Activated naive CD4-positive, alpha-beta T cell treated with anti-CD3 and anti-CD28 coated beads for 36 hours (primary cell): ENCODE measurements at regions of chr9 and their contacts with region 1.

Region 1: DNA sequence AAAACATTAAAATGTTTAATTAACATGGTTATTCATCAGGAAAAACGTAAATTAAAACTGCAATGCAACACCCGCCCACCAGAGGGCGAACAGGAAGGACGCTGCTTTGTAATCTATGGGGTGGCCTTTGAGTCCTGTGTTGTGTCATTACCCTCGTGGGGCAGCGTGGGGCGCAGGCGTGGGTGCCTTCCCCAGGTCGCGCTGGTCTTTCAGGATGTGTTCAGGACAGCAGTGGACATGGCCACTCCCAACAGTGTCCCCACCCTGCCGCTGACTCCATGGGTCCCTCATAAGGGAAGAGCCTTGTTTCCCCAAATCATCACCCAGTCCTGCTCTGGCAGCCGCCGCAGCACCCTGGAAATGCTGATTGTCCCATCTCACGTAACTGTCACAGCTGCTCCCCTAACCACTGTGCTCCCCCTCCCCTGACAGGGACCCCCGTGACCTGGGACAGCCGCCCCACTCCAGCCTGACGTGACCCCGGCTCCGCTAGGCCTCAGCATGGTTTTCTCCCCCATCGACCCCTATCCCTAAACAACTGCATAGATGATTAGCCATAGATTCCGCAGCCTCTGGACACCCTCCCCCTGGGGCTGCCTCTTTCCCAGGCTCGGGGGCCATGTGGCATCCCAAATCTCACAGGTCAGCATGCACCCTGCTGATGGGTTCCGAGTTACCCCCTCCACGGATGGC is 36.4 kb downstream of the GLT6D1 start:
- DNase-seq: peak; percentile 70
- H3K4me3 Mint-ChIP-seq: no peak overlapping the region
- H3K27ac Mint-ChIP-seq: no peak overlapping the region
- H3K4me1 Mint-ChIP-seq: no peaks in the 10 kb centered on the region
- H3K27me3 Mint-ChIP-seq: peaks cover 4% of the 10 kb centered on the region

Region 2: GRCh38 chr9:135500525-135501358 is 102.2 kb before region 1 on chr9 and contains the start of gene MRPS2:
- CTCF ChIA-PET with region 1: no interaction called
- intact Hi-C with region 1: loop called (anchors 5 kb)
- DNase-seq: peak; percentile 85
- H3K4me3 Mint-ChIP-seq: peak within 1 kb of the TSS; percentile 93
- H3K27ac Mint-ChIP-seq: peak within 1 kb of the TSS; percentile 93
- H3K4me1 Mint-ChIP-seq: peaks cover 26% of the 10 kb centered on the region
- H3K27me3 Mint-ChIP-seq: peaks cover 3% of the 10 kb centered on the region
- total RNA-seq, gene MRPS2: 36.9 to 40.7 TPM

Region 3: GRCh38 chr9:135516132-135516860 is 86.6 kb before region 1 on chr9:
- CTCF ChIA-PET with region 1: no interaction called
- intact Hi-C with region 1: no loop called
- DNase-seq: peak; percentile 33
- H3K4me3 Mint-ChIP-seq: no peak overlapping the region
- H3K27ac Mint-ChIP-seq: no peak overlapping the region
- H3K4me1 Mint-ChIP-seq: peaks cover 3% of the 10 kb centered on the region
- H3K27me3 Mint-ChIP-seq: peaks cover 20% of the 10 kb centered on the region

Region 4: GRCh38 chr9:135701959-135702721 is 99.2 kb after region 1 on chr9 and contains the start of gene KCNT1:
- CTCF ChIA-PET with region 1: no interaction called
- intact Hi-C with region 1: loop called (anchors 10 kb)
- DNase-seq: peak; percentile 62
- H3K4me3 Mint-ChIP-seq: no peak within 1 kb of the TSS
- H3K27ac Mint-ChIP-seq: no peak within 1 kb of the TSS
- H3K4me1 Mint-ChIP-seq: no peaks in the 10 kb centered on the region
- H3K27me3 Mint-ChIP-seq: peaks cover 5% of the 10 kb centered on the region
- total RNA-seq, gene KCNT1: not detected